Dendritic cell treated with granulocyte-macrophage colony-stimulating factor and Interleukin-4, amounts not matched to agents 40 ng/mL and 50 ng/mL, for 4 days (primary cell): ENCODE measurements at regions of chr5 and their contacts with region 1.

Region 1: DNA sequence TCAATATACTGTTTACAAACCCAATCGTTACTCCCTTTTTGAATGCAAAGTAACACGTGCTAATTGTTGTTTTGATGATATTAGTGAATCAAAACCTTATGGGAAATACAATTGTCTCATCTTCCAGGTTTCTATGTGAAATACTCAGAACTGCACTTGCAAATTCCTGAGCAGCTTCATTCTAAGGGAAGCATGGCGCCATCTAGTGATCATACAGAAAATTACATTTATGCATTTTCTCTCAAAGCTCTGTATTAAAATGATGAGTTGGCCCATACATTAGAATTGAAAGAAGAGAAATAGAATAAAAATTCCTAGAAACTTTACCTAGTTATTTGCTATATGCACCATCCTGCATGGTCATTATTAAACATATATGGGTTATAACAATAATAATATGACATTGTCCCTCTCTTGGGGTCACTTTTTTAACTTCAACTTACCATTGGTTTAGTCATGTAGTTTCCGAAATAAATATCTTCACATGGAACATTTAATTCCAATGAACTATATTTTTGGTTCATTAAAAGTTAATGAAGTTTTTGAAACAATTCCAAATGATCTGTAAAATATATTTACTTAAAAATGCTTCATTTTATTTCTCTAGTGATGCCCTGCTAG is 220.0 kb downstream of the PDE4D start:
- H3K4me3 Mint-ChIP-seq: no peak overlapping the region
- H3K27ac Mint-ChIP-seq: no peak overlapping the region
- H3K4me1 Mint-ChIP-seq: peaks cover 6% of the 10 kb centered on the region
- H3K27me3 Mint-ChIP-seq: no peaks in the 10 kb centered on the region

Region 2: DNA sequence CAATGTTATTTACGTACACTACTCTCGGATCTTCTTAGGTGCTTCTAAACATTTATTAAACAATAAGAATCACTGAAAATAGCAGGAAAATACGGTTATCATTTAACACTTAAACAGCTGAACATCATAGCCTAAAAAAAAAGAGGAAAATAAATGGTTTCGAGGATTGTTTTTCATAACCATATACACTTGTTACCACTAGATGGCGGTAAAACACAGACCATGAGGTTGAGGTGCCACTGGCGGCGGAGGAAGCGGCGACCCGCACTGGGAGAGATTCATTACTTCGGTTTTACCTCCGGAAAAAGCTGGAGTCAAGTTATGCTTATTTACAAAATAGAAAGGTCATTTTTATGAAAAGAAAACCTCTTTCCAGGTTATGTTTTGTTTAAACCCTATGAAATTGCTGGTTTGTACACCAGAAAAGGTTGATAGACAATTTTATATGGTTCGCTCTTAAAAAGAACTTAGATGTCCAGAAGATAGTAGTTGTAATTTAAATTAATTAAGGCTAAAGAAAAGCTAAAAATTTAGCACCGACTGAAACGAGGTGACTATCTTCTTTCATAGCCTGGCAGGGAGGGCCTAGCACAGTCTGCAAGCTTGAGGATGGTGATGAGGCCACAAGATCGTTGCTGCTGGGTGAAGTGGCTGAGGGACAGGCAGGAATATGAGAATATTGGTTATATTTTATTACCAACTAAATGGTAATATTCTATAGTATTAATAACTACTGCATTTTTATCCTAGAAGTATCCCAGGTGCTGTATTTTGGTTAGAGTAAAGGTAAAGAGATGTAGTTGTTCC is 484.9 kb before region 1 on chr5:
- intact Hi-C with region 1: loop called (anchors 2 kb)
- H3K4me3 Mint-ChIP-seq: peak overlapping the region; percentile 28
- H3K27ac Mint-ChIP-seq: no peak overlapping the region
- H3K4me1 Mint-ChIP-seq: no peaks in the 10 kb centered on the region
- H3K27me3 Mint-ChIP-seq: peaks cover 2% of the 10 kb centered on the region

Region 3: GRCh38 chr5:59390074-59390659 is 283.4 kb before region 1 on chr5:
- intact Hi-C with region 1: loop called (anchors 2 kb)
- H3K4me3 Mint-ChIP-seq: no peak overlapping the region
- H3K27ac Mint-ChIP-seq: no peak overlapping the region
- H3K4me1 Mint-ChIP-seq: no peaks in the 10 kb centered on the region
- H3K27me3 Mint-ChIP-seq: no peaks in the 10 kb centered on the region

Region 4: GRCh38 chr5:59506285-59506877 is 167.2 kb before region 1 on chr5:
- intact Hi-C with region 1: loop called (anchors 2 kb)
- H3K4me3 Mint-ChIP-seq: no peak overlapping the region
- H3K27ac Mint-ChIP-seq: no peak overlapping the region
- H3K4me1 Mint-ChIP-seq: no peaks in the 10 kb centered on the region
- H3K27me3 Mint-ChIP-seq: no peaks in the 10 kb centered on the region

Region 5: GRCh38 chr5:59799668-59800346 is 126.3 kb after region 1 on chr5:
- intact Hi-C with region 1: loop called (anchors 5 kb)
- H3K4me3 Mint-ChIP-seq: no peak overlapping the region
- H3K27ac Mint-ChIP-seq: no peak overlapping the region
- H3K4me1 Mint-ChIP-seq: peaks cover 10% of the 10 kb centered on the region
- H3K27me3 Mint-ChIP-seq: no peaks in the 10 kb centered on the region